Left cardiac atrium (tissue), 4 donors: ENCODE measurements at regions of chr12 and their contacts with region 1.

Region 1: GRCh38 chr12:121626087-121626852 is at the start of gene ORAI1:
- DNase-seq: peak; percentile 99
- ATAC-seq: peak; percentile 95
- total RNA-seq, gene ORAI1: 11.7 to 12.9 TPM

Region 2: GRCh38 chr12:121550974-121551634 is 75.2 kb before region 1 on chr12:
- intact Hi-C with region 1: loop called in 1 of 2 experiments (anchors 5 kb)
- DNase-seq: no peak
- ATAC-seq: no peak

Region 3: GRCh38 chr12:121579981-121580868 is 46.0 kb before region 1 on chr12:
- intact Hi-C with region 1: loop called in 1 of 2 experiments (anchors 10 kb)
- DNase-seq: peak; percentile 75
- ATAC-seq: peak; percentile 66 to 67

Region 4: DNA sequence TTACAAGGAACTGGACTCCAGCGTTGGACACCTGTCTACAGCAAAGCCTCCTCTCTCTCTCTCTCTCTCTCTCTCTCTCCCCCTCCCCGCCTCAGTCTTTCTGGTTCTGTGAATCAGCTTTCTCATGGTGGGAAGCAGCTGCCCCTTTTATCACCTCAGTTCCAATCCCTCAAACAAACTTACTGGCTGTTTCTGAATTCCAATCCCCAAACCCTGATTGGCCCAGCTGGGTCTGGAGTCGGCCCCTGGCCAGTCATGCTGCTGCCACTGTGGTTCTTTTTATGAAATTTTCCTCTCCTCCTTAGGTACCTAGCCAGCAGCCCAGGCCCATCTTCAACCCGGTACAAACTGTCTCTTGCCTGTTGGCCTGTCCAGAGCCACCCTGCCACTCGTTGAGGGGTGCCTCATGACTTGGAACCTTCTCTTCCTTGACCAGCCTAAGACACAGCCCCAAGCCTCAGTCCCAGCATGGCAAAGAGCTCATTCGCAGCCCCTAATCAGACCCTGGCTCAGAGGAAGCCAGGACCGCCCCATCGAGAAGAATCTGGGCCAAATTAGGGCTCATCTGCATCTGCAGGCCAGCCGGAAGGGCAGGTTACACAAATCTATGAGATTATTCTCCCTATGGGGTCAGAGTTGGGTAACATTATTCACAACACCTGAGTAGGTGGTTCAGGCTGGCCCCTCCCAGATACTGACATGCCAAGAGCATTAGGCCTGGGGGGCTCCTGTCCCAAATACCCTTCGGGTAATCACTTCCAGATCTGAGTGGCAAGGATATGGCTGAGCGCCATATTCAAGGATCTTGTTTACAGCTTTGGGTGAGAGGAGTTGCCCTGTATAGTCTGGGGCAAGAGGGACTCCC is 52.7 kb after region 1 on chr12:
- intact Hi-C with region 1: loop called in 1 of 2 experiments (anchors 5 kb)
- DNase-seq: no peak
- ATAC-seq: no peak